ENCODE measurements at regions of chr9 and their contacts with region 1.

Region 1: DNA sequence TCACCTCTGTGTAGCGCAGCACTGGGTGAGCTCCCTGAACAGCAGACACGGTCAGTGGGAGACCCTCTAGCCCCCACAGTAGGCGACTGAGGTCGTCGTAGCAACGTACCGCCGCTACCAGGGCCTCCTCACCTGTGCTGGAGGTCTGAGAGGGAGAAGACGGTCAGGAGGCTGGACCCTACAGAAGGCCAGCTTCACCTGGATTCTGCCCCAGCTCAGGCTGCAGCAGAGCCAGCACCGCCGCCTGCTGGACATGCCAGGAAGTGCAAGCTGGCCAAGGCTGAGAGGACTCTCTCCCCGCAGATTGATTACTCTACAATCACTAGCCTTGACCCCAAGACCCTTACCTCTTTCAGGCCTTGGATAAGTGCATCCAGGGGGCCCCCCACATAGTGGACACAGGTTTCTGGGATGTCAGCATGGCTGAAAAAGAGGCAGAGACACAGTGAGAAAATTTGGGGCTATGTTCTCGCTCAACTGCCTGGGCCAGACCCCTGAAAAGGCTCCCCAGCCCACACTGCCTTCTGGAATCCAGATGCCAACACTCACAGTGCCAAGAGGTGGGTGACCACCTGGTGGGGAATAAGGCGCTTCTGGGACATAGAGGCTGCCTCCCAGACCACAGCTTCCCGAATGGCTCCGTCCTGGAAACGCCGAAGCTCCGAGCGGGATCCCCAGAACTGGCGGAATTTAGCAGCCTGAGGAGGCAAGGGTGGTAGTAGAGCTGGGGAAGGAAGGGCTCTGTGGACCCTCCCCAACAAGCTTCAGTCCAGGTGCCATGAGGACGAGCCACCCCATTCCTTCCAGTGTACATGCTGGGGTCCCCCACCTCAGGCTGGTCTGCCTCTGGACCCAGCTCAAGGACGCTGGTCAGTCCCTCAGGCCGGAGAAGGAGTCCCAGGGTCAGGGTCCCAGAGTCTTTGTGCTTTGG is 6.9 kb downstream of the NOL6 start:
- DNase-seq: peak; percentile 45 to 77
- H3K4me3 ChIP-seq: no peak overlapping the region
- H3K27ac ChIP-seq: no peak overlapping the region
- H3K4me1 ChIP-seq: peaks cover 0 to 1% (median under 1%) of the 10 kb centered on the region in 4 donors
- H3K27me3 ChIP-seq: no peaks in the 10 kb centered on the region
- CTCF ChIP-seq: peak; percentile 80 to 93

Region 2: GRCh38 chr9:33374634-33375213 is 92.1 kb before region 1 on chr9:
- intact Hi-C with region 1: loop called (anchors 5 kb)
- DNase-seq: peak; percentile 81 to 87
- H3K4me3 ChIP-seq: peak overlapping the region; percentile 6 to 25
- H3K27ac ChIP-seq: no peak overlapping the region
- H3K4me1 ChIP-seq: peaks cover 0 to 6% (median 0%) of the 10 kb centered on the region in 4 donors
- H3K27me3 ChIP-seq: no peaks in the 10 kb centered on the region
- CTCF ChIP-seq: peak; percentile 83 to 89

Region 3: GRCh38 chr9:33404788-33405362 is 62.0 kb before region 1 on chr9:
- intact Hi-C with region 1: loop called (anchors 5 kb)
- DNase-seq: no peak
- H3K4me3 ChIP-seq: no peak overlapping the region
- H3K27ac ChIP-seq: no peak overlapping the region
- H3K4me1 ChIP-seq: peaks cover 0 to 39% (median 16%) of the 10 kb centered on the region in 4 donors
- H3K27me3 ChIP-seq: no peaks in the 10 kb centered on the region
- CTCF ChIP-seq: no peak

Region 4: DNA sequence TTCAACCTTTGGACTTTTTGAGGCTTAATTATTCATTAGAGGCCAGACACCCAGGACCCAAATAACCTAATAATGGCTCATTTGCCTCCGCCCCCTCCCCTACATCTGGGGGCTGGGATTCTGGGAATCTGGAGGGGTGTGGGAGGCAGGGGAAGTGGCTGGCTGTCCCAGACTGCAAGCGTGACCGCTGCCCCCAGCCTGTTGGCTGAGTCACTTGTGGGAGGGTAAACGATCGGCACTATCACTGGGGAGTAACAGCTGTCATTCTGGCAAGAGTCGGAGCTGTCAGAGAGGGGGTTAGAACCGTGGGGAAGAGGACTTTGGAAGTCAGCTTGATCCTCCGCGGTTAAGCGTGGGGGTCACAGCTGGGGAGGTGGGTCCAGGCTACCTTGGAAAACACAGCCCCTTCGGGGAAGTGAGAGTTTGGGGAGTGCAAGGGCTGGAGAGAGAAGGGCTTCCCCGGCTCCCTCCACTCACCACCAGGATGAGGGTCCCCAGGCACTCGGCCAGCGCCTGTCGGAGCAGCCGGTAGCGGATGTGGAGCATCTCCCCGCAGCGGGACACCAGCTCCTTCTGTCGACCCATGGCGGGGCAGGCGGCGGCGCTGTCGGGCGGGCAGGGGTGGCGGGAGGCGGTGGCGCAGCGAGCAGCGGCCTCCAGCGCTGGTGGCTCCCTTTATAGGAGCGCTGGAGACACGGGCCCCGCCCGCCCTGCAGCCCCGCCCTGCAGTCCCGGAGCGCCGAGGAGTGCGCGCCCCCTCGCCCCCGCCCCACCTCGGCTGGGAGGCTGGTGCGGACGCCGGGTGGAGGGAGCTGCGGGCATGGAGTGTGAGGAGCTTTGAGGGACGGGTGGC is 19.7 kb before region 1 on chr9 and contains the start of gene AQP3:
- intact Hi-C with region 1: no loop called
- DNase-seq: peak; percentile 38 to 81
- H3K4me3 ChIP-seq: peak within 1 kb of the TSS; percentile 47 to 59
- H3K27ac ChIP-seq: peak within 1 kb of the TSS; percentile 8 to 36
- H3K4me1 ChIP-seq: peaks cover 3 to 23% (median 16%) of the 10 kb centered on the region in 4 donors
- H3K27me3 ChIP-seq: no peaks in the 10 kb centered on the region
- CTCF ChIP-seq: no peak

Region 5: GRCh38 chr9:33517373-33517772 is 50.5 kb after region 1 on chr9:
- intact Hi-C with region 1: no loop called
- DNase-seq: no peak
- H3K4me3 ChIP-seq: no peak overlapping the region
- H3K27ac ChIP-seq: no peak overlapping the region
- H3K4me1 ChIP-seq: no peaks in the 10 kb centered on the region
- H3K27me3 ChIP-seq: no peaks in the 10 kb centered on the region
- CTCF ChIP-seq: peak; percentile 31 to 49

Measured in tibial artery (tissue), 4 donors.